Brain microvascular endothelial cell (primary cell): ENCODE measurements at regions of chr17 and their contacts with region 1.

Region 1: GRCh38 chr17:44324571-44325275 is at the start of gene SLC25A39:
- DNase-seq: peak; percentile 82
- H3K4me3 ChIP-seq: peak within 1 kb of the TSS; percentile 76
- H3K27ac ChIP-seq: peak within 1 kb of the TSS; percentile 36
- H3K27me3 ChIP-seq: no peaks in the 10 kb centered on the region
- CTCF ChIP-seq: no peak

Region 2: DNA sequence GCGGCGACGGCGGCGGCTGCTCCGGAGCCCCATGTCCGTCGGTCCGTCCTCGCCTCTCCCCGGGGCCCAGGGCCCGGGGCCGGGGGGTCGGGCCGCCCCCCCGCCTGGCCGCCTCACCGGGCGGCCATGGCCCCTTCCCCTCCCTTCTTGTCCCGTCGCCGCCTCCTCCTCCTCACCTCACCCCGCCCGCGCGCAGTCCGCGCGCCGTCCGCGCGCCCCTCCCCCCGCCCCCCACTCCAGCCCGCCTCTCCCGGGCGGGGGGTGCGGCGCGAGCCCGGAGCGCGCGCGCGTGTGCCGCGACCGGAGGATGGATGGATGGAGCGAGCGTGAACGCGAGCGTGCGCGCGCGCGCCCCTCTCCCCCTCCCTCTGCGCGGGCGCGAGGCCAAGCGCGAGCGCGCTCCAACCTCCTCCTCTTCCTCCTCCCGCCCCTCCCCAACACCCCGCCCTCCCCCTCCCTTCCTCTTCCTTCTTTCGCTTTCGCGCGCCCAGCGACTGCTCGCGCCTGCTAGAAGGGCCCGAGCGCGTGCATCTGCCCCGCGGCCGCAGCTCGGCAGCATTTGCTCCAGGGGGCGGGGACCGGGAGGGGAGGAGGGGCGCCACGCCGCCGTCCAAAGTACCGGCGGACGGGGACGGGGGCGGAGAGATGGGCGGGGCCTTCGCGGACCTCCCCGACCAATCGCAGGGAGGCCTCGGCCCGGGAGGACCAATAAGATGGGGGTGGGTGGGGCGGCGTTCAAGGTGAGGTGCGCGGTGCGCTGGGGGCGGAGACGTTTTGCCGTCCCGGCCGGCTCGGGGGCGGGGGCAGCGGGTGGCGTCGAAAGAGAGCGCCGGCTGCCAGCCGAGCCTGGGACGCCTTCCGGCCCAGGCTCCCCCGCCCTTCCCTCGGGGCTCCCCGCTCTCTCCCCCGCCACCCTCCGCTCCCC is 124.9 kb before region 1 on chr17 and contains the start of gene ATXN7L3:
- in situ Hi-C with region 1: loop called (anchors 10 kb)
- DNase-seq: peak; percentile 98
- H3K4me3 ChIP-seq: peak within 1 kb of the TSS; percentile 76
- H3K27ac ChIP-seq: peak within 1 kb of the TSS; percentile 81
- H3K27me3 ChIP-seq: no peaks in the 10 kb centered on the region
- CTCF ChIP-seq: no peak

Region 3: DNA sequence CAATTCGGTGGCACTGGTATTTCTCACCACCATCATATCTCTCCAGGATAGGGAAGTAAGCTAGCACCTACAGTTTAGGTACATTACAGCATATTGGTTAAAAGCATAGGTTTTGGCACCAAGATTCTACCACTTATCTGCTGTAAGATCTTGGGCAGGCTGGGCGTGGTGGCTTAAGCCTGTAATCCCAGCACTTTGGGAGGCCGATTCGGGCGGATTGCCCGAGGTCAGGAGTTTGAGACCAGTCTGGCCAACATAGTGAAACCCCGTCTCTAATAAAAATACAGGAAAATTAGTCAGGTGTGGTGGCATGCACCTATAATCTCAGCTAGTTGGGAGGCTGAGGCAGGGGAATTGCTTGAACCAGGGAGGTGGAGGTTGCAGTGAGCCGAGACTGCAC is 127.1 kb after region 1 on chr17:
- in situ Hi-C with region 1: no loop called
- DNase-seq: no peak
- H3K4me3 ChIP-seq: no peak overlapping the region
- H3K27ac ChIP-seq: no peak overlapping the region
- H3K27me3 ChIP-seq: no peaks in the 10 kb centered on the region
- CTCF ChIP-seq: no peak

Region 4: DNA sequence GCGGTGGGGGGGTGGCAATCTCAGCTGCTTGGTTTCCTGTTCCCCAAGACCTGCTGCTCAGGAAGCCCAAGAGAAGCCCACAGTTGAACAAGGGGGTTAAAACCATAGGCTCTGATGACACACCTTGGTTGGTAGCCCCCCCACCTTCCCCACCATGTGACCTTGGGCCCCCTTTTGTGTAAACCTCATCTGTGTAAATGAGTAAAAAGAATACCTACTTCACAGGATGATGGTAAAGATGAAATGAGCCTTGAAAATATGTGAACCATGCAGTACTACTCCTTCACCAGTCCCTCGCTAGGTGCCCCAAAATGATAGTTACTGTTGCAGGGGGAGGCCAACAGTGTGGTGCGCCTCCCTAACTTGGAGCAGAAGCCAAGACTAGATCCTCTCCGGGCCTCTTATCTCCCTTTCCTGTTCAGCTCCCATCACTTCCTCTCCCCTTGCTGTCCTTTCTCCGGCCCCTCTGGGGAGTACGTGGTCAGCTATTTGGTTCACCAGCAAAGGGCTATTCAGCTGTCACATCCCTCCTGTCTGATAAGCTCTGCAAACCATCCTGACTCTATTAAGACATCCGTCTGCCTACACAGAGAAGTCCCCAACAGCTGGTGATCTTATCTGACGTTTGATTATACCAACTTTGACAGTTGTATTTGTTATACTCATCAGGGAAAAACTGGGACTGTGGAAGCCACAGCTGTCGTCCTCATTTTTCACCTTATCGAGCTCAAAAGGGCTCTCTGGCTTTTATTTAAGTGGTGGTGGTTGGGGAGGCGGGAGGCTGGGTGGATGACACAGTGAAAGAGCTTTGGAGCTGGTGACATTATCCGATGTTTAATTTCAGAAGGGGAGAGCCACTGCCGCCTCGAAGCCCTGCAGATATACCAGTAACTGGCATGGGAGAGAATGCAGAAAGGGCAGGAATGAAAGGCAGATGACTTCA is 706.8 kb after region 1 on chr17:
- in situ Hi-C with region 1: no loop called
- DNase-seq: no peak
- H3K4me3 ChIP-seq: no peak overlapping the region
- H3K27ac ChIP-seq: no peak overlapping the region
- H3K27me3 ChIP-seq: no peaks in the 10 kb centered on the region
- CTCF ChIP-seq: no peak